CD14-positive monocyte (primary cell): ENCODE measurements at regions of chr2 and their contacts with region 1.

Region 1: DNA sequence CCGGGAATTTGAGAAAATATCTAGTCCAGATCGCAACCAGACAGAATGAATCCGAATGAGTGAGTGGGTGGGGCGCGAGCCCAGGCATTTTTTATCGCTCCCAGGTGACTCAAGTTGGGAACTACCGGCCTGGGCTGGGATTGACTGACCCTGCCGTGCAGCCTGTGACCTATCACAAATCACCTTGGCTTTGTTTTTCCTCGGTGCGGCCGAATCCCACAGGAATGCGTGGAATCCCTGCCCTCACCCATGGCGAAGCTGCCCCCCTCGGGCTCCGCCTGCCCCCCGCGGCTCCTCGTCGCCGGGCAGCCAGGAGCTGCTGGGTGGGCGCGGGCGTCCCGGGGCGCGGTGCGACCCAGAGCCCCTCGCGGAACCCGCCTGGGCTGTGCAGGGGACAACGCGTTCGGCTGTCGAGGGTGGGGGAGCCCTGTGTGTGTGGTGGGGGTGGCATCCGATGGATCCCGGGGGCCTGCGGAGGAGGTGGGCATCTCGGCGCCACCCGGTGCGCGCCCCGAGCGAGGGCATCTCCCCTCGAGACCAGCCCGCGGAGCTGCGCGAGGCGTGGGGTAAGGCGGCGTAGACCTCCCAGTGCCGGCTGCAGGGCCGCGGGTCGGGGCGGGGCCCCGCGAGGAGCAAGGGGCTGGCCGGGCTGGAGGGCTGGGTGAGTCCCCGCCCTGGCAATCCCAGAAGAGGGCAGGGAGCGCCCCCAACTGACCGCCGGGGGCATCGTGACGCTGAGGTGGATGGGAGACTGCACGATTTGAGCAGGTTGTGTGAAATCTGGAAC is 16.5 kb downstream of the B3GNT7 start:
- DNase-seq: peak; percentile 28 to 58 (median 35)
- H3K4me3 ChIP-seq: peak overlapping the region in 2 of 3 experiments; percentile 4 to 67
- H3K4me3 Mint-ChIP-seq: peak overlapping the region; percentile 56 to 87
- H3K27ac ChIP-seq: no peak overlapping the region
- H3K27ac Mint-ChIP-seq: peak overlapping the region in 1 of 7 donors; percentile 36
- H3K4me1 ChIP-seq: peaks cover 5 to 13% of the 10 kb centered on the region in 2 donors
- H3K4me1 Mint-ChIP-seq: peaks cover 9% of the 10 kb centered on the region
- H3K27me3 ChIP-seq: peaks cover 8 to 21% of the 10 kb centered on the region in 2 donors
- H3K27me3 Mint-ChIP-seq: peaks cover 23 to 30% (median 25%) of the 10 kb centered on the region in 3 donors
- CTCF ChIP-seq: peak; percentile 76

Region 2: GRCh38 chr2:231227309-231228162 is 184.5 kb before region 1 on chr2:
- intact Hi-C with region 1: loop called (anchors 5 kb)
- DNase-seq: peak; percentile 62 to 80 (median 62)
- H3K4me3 ChIP-seq: no peak overlapping the region
- H3K4me3 Mint-ChIP-seq: no peak overlapping the region
- H3K27ac ChIP-seq: no peak overlapping the region
- H3K27ac Mint-ChIP-seq: peak overlapping the region in 1 of 7 donors; percentile 24
- H3K4me1 ChIP-seq: peaks cover 5 to 10% of the 10 kb centered on the region in 2 donors
- H3K4me1 Mint-ChIP-seq: no peaks in the 10 kb centered on the region
- H3K27me3 ChIP-seq: no peaks in the 10 kb centered on the region
- H3K27me3 Mint-ChIP-seq: peaks cover 0 to 3% (median 0%) of the 10 kb centered on the region in 3 donors
- CTCF ChIP-seq: peak; percentile 82

Region 3: GRCh38 chr2:231297108-231297908 is 114.7 kb before region 1 on chr2:
- intact Hi-C with region 1: loop called in 1 of 2 experiments (anchors 5 kb)
- DNase-seq: peak; percentile 33 to 61 (median 58)
- H3K4me3 ChIP-seq: no peak overlapping the region
- H3K4me3 Mint-ChIP-seq: no peak overlapping the region
- H3K27ac ChIP-seq: no peak overlapping the region
- H3K27ac Mint-ChIP-seq: peak overlapping the region in 2 of 7 donors; percentile 38 to 70
- H3K4me1 ChIP-seq: peaks cover 46 to 52% of the 10 kb centered on the region in 2 donors
- H3K4me1 Mint-ChIP-seq: peaks cover 47% of the 10 kb centered on the region
- H3K27me3 ChIP-seq: no peaks in the 10 kb centered on the region
- H3K27me3 Mint-ChIP-seq: peaks cover 0 to 4% (median 2%) of the 10 kb centered on the region in 3 donors
- CTCF ChIP-seq: peak; percentile 75